Activated naive CD4-positive, alpha-beta T cell treated with anti-CD3 and anti-CD28 coated beads, Interleukin-2, amount 10 ng/mL, durations not matched to agents 7 days and 5 days (primary cell): ENCODE measurements at regions of chr6 and their contacts with region 1.

Region 1: GRCh38 chr6:138428944-138429598 is 25.0 kb downstream of the HEBP2 start:
- DNase-seq: no peak
- H3K4me3 Mint-ChIP-seq: no peak overlapping the region
- H3K27ac Mint-ChIP-seq: no peak overlapping the region
- H3K4me1 Mint-ChIP-seq: peaks cover 2% of the 10 kb centered on the region
- H3K27me3 Mint-ChIP-seq: peaks cover 18% of the 10 kb centered on the region

Region 2: DNA sequence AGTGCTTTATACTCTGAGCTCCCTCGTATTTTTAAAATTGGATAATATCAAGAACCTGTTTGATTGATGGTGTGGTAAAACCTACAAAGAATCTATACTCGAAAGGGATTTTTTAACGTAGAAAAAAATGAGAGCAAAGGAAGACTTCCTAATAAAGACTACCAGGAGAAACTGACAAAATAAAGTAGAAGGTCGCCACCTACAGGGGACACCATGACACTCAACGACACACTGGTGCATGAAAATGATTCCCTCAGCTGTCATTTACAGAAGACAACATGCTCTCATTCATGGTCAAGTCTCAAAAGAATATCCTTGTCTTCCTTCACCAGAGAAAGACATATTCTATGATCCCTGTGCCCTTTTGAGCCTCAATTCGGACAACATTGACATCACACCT is 80.3 kb after region 1 on chr6:
- CTCF ChIA-PET with region 1: interaction called, 153 read pairs
- DNase-seq: peak; percentile 70
- H3K4me3 Mint-ChIP-seq: no peak overlapping the region
- H3K27ac Mint-ChIP-seq: no peak overlapping the region
- H3K4me1 Mint-ChIP-seq: peaks cover 6% of the 10 kb centered on the region
- H3K27me3 Mint-ChIP-seq: peaks cover 4% of the 10 kb centered on the region

Region 3: GRCh38 chr6:138517635-138518034 is 88.6 kb after region 1 on chr6:
- CTCF ChIA-PET with region 1: interaction called, 106 read pairs
- DNase-seq: peak; percentile 74
- H3K4me3 Mint-ChIP-seq: no peak overlapping the region
- H3K27ac Mint-ChIP-seq: no peak overlapping the region
- H3K4me1 Mint-ChIP-seq: peaks cover 22% of the 10 kb centered on the region
- H3K27me3 Mint-ChIP-seq: peaks cover 3% of the 10 kb centered on the region

Region 4: DNA sequence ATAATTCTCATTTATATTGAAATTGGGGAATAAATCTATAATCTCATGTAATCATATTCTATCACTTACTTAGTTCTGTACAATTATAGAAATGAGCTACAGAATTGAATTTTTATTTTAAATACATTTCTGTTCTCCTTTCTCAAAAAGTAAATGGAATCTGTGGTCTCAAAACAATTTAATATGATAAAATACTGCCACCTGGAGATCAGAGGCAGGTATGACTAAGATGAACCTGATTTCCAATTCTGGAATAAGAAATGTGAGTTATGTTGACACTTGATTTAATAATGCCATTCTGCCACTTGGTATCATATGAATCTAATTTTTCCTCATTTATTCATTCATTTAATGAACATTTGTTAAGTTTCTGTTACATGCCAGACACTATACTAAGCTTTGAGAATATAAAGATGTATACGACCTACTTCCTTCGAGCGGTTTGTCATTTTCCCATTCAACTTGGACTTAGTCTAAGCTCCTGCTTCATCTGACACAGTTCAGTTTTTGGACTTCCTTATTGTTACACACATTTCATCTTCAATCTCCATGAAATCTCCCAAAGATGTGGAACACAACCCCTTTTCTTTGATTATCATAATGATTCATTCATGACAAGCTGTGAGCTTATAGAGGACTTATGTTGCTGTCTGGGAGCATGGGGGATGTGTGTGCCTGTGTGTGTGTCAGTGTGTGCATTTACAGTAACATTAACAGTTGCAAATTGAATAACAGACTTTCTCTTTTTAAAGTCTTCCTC is 337.0 kb after region 1 on chr6:
- CTCF ChIA-PET with region 1: interaction called, 10 read pairs
- DNase-seq: no peak
- H3K4me3 Mint-ChIP-seq: no peak overlapping the region
- H3K27ac Mint-ChIP-seq: no peak overlapping the region
- H3K4me1 Mint-ChIP-seq: peaks cover 4% of the 10 kb centered on the region
- H3K27me3 Mint-ChIP-seq: no peaks in the 10 kb centered on the region